ENCODE measurements at regions of chr10 and their contacts with region 1.

Region 1: GRCh38 chr10:72337020-72337629 is 17.6 kb downstream of the DNAJB12 start:
- DNase-seq: peak; percentile 41 to 71 (median 57)
- H3K4me3 ChIP-seq: no peak overlapping the region
- H3K4me3 Mint-ChIP-seq: peak overlapping the region in 3 of 7 donors; percentile 28 to 50 (median 32)
- H3K27ac ChIP-seq: no peak overlapping the region
- H3K27ac Mint-ChIP-seq: peak overlapping the region in 7 of 8 donors; percentile 50 to 98 (median 92)
- H3K4me1 ChIP-seq: peaks cover 57% of the 10 kb centered on the region
- H3K4me1 Mint-ChIP-seq: peaks cover 54 to 70% (median 55%) of the 10 kb centered on the region in 3 donors
- H3K27me3 ChIP-seq: no peaks in the 10 kb centered on the region
- H3K27me3 Mint-ChIP-seq: no peaks in the 10 kb centered on the region

Region 2: GRCh38 chr10:72133517-72133916 is 203.6 kb before region 1 on chr10:
- CTCF ChIA-PET with region 1: interaction called, 57 read pairs
- POLR2A ChIA-PET with region 1: no interaction called
- DNase-seq: no peak
- H3K4me3 ChIP-seq: no peak overlapping the region
- H3K4me3 Mint-ChIP-seq: no peak overlapping the region
- H3K27ac ChIP-seq: no peak overlapping the region
- H3K27ac Mint-ChIP-seq: peak overlapping the region in 5 of 8 donors; percentile 0 to 43 (median 41)
- H3K4me1 ChIP-seq: peaks cover 21% of the 10 kb centered on the region
- H3K4me1 Mint-ChIP-seq: peaks cover 24 to 36% (median 26%) of the 10 kb centered on the region in 3 donors
- H3K27me3 ChIP-seq: no peaks in the 10 kb centered on the region
- H3K27me3 Mint-ChIP-seq: no peaks in the 10 kb centered on the region

Region 3: GRCh38 chr10:72278668-72279393 is 58.3 kb before region 1 on chr10:
- CTCF ChIA-PET with region 1: interaction called, 88 read pairs
- POLR2A ChIA-PET with region 1: interaction called, 7 read pairs
- DNase-seq: no peak
- H3K4me3 ChIP-seq: no peak overlapping the region
- H3K4me3 Mint-ChIP-seq: peak overlapping the region in 1 of 7 donors; percentile 98
- H3K27ac ChIP-seq: no peak overlapping the region
- H3K27ac Mint-ChIP-seq: peak overlapping the region in 5 of 8 donors; percentile 3 to 96 (median 61)
- H3K4me1 ChIP-seq: peaks cover 22% of the 10 kb centered on the region
- H3K4me1 Mint-ChIP-seq: peaks cover 22 to 37% (median 35%) of the 10 kb centered on the region in 3 donors
- H3K27me3 ChIP-seq: no peaks in the 10 kb centered on the region
- H3K27me3 Mint-ChIP-seq: no peaks in the 10 kb centered on the region

Region 4: DNA sequence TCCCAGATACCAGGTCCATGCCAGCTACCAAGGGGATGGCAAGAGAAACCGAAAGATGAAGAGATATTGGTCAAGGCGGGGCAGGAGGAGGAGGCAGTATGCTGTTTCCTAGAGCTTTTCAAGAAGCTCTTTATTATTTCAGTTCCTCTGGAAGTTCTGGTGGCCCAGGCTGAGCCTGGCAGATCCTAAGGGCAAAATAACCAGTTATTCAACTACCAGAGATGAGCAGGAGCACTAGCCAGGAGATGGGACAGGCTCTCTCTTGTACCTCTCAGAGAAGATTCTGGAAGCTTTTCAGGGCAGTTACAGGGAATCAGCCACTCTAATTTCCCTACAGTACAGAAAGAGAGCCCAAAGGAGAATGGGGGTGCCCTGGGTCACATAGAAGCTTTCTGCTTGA is 12.3 kb after region 1 on chr10:
- CTCF ChIA-PET with region 1: interaction called, 11 read pairs
- POLR2A ChIA-PET with region 1: interaction called, 3 read pairs
- DNase-seq: no peak
- H3K4me3 ChIP-seq: no peak overlapping the region
- H3K4me3 Mint-ChIP-seq: peak overlapping the region in 1 of 7 donors; percentile 83
- H3K27ac ChIP-seq: no peak overlapping the region
- H3K27ac Mint-ChIP-seq: peak overlapping the region in 4 of 8 donors; percentile 45 to 84 (median 75)
- H3K4me1 ChIP-seq: peaks cover 22% of the 10 kb centered on the region
- H3K4me1 Mint-ChIP-seq: peaks cover 43 to 61% (median 45%) of the 10 kb centered on the region in 3 donors
- H3K27me3 ChIP-seq: no peaks in the 10 kb centered on the region
- H3K27me3 Mint-ChIP-seq: no peaks in the 10 kb centered on the region

Region 5: DNA sequence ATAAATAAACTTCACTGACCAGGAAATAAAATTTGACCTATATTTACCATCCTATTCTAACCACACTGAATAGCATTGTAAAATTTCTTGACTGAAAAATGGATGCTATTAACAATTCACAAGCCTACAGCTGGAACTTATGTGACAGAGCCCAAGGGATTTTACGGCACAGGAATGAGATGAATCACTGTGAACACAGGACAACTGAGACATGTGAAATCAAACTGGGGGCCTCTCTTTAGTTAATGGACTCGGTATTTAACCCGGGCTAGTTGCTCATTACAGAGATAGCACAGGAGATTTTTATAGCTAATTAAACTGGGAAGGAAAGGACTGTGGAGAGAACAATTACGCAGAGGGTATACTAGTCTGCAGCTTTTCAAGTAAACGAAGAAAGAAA is 188.2 kb after region 1 on chr10:
- CTCF ChIA-PET with region 1: no interaction called
- POLR2A ChIA-PET with region 1: no interaction called
- DNase-seq: no peak
- H3K4me3 ChIP-seq: no peak overlapping the region
- H3K4me3 Mint-ChIP-seq: no peak overlapping the region
- H3K27ac ChIP-seq: no peak overlapping the region
- H3K27ac Mint-ChIP-seq: no peak overlapping the region
- H3K4me1 ChIP-seq: no peaks in the 10 kb centered on the region
- H3K4me1 Mint-ChIP-seq: no peaks in the 10 kb centered on the region
- H3K27me3 ChIP-seq: no peaks in the 10 kb centered on the region
- H3K27me3 Mint-ChIP-seq: no peaks in the 10 kb centered on the region